GM13977 (cell line): ENCODE measurements at regions of chr12 and their contacts with region 1.

Region 1: DNA sequence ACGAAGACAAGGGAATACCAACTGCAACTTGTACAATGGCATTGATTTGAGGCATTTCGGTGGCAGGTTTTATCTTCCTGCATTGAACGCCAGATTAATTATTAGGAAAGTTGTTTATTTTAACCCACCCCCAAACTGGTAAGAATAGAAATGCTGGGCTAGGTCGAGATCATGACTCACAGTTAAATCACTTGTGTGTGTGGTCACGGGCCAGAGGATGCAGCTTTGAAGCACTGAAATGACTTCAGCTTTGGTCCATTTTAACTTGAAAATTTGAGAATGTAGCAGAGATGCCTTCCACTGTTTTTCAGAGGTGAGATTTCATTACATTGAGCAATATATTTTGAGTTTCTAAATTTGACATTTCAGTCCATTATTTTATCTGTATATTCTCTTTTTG is 23.6 kb upstream of the KCNH3 start:
- DNase-seq: no peak
- CTCF ChIP-seq: no peak

Region 2: GRCh38 chr12:49364989-49365388 is 150.3 kb before region 1 on chr12:
- in situ Hi-C with region 1: loop called (anchors 5 kb)
- DNase-seq: no peak
- CTCF ChIP-seq: no peak